HepG2 (cell line): ENCODE measurements at regions of chr20 and their contacts with region 1.

Region 1: DNA sequence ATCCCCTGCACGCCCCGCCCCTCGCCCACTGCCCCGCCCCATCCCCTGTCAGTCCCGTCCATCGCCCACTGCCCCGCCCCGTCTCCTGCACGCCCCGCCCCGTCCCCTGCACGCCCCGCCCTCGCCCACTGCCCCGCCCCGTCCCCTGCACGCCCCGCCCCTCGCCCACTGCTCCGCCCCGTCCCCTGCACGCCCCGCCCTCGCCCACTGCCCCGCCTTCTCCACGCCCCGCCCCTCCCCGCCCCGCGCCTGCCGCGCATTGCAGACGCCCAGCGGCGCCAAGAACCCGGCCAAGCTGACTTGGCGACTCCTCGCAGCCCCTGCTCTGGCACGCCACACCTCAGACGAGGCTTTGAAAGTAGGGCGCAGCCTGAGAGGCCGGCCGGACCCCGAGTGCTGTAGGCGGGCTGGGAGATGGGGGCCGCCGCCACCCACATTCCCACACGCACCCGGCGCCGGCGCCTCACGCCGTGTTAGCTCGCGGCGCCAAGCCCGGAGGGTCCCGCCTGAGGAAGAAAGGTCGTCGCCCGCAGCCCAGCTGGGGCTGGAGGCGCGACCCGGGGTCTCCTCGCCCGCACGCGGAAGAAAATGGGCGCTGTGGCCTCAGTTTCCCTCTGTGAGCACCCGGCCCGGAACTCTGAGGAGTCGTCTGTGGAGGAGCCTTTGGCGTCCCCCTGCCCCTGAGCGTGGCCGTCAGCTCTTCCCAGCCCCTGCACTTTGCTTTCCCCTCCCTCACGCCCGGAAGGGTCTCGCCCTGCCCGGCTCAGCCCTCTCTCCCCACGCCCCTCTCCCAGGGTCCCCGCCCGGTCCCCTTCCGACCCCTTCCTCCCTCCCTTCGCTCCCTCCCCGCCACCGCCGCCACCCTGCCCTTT is at the start of gene RAD21L1:
- DNase-seq: no peak
- ATAC-seq: peak; percentile 82
- H3K4me3 ChIP-seq: peak within 1 kb of the TSS; percentile 73 to 82 (median 75)
- H3K27ac ChIP-seq: no peak within 1 kb of the TSS
- H3K4me1 ChIP-seq: peaks cover 13% of the 10 kb centered on the region
- H3K27me3 ChIP-seq: peaks cover 4 to 27% of the 10 kb centered on the region in 2 experiments
- CTCF ChIP-seq: peak; percentile 29
- EP300 ChIP-seq: no peak
- POLR2A ChIP-seq: no peak
- RAD21 ChIP-seq: 0 out of 2 replicates have a peak, but pooled peaks have one; percentile 33
- total RNA-seq, gene RAD21L1: not detected in 2 replicates

Region 2: DNA sequence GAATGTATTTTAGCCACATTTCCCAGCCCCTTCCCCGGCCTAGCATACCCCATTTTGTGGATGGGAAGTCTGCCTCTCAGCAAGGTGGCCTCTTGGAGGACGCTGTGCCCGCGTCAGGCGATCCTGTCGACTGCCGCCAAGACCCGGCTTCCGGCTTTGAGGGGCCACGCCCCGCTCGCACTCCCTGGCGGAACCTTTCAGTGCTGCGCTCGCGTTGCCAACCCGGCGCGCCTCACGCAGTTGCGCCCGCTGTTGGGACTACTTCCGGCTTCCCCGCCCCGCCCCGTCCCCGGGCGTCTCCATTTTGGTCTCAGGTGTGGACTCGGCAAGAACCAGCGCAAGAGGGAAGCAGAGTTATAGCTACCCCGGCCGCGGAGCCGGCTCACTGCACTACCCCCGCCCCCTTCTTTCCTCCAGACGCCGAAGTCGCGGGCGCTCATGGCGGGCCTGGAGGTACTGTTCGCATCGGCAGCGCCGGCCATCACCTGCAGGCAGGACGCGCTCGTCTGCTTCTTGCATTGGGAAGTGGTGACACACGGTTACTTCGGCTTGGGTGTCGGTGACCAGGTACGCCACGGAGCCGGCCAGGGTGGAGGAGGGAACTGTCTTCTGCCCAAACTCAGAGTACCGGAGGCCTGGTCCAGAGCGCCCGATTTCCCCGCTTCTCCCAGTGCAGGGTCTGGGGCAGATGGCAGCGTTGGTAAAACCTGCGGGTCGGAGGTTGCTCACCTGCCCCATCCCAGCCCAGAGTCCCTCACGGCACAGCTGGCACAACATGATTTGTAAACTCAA is 107.5 kb before region 1 on chr20 and contains the start of gene PSMF1:
- CTCF ChIA-PET with region 1: no interaction called
- POLR2A ChIA-PET with region 1: no interaction called
- in situ Hi-C with region 1: no loop called
- intact Hi-C with region 1: loop called (anchors 5 kb)
- DNase-seq: peak; percentile 92
- ATAC-seq: peak; percentile 89
- H3K4me3 ChIP-seq: peak within 1 kb of the TSS; percentile 80 to 99 (median 93)
- H3K27ac ChIP-seq: peak within 1 kb of the TSS; percentile 72
- H3K4me1 ChIP-seq: peaks cover 62% of the 10 kb centered on the region
- H3K27me3 ChIP-seq: no peaks in the 10 kb centered on the region; a peak in 1 of 5 replicates
- CTCF ChIP-seq: peak; percentile 63
- EP300 ChIP-seq: peak; percentile 73 to 86
- POLR2A ChIP-seq: peak; percentile 97
- RAD21 ChIP-seq: peak; percentile 77
- total RNA-seq, gene PSMF1: 86.0 and 113 TPM in 2 replicates

Region 3: DNA sequence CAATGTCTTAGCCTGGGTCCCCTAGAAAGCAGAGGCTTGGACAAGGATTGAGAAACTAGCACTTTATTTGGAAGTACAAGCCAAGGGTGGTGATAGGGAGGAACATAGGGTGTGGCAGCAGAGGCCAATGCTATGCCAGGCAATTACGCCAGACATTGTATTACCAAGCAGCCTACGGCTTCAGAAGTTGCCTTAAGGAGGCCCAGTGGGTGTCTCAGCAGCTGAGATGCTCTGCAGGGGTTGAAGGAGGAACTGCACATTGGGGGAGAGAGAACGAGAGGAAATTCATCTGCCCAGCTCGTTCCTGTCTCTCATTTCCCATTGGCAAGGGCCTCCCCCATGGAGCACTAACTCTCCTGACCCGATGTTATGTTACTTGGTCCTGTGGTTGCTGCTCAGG is 21.9 kb before region 1 on chr20:
- CTCF ChIA-PET with region 1: no interaction called
- POLR2A ChIA-PET with region 1: no interaction called
- in situ Hi-C with region 1: no loop called
- intact Hi-C with region 1: no loop called
- DNase-seq: no peak
- ATAC-seq: no peak
- H3K4me3 ChIP-seq: no peak overlapping the region
- H3K27ac ChIP-seq: no peak overlapping the region
- H3K4me1 ChIP-seq: no peaks in the 10 kb centered on the region
- H3K27me3 ChIP-seq: peaks cover 1 to 27% of the 10 kb centered on the region in 2 experiments; a peak in 3 of 5 replicates
- CTCF ChIP-seq: no peak
- EP300 ChIP-seq: no peak
- POLR2A ChIP-seq: no peak
- RAD21 ChIP-seq: no peak